ENCODE measurements at regions of chrX and their contacts with region 1.

Region 1: DNA sequence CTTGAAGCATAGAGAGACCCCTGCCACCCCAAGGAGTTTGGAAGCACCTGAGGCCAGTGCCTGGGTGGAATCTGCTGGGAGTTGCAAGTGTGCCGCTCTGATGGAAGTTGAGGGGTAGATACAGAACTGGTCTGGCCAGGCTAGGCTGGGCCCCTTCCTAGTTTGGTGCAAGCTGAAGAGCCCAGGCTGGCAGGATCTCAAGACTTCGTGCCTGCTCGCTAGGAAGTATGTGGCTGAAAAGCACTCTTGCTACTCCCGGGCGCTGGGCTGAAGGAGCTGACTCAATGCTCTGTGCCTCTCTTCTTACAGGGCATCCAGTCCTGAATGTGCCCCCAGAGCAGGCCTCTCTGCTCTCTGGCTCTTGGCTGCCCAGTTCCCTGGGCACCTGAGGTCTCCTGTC is 51.7 kb upstream of the PJA1 start:
- DNase-seq: no peak
- ATAC-seq: no peak
- H3K4me3 ChIP-seq: no peak overlapping the region
- H3K27ac ChIP-seq: no peak overlapping the region
- H3K4me1 ChIP-seq: no peaks in the 10 kb centered on the region
- H3K27me3 ChIP-seq: no peaks in the 10 kb centered on the region
- CTCF ChIP-seq: no peak

Region 2: DNA sequence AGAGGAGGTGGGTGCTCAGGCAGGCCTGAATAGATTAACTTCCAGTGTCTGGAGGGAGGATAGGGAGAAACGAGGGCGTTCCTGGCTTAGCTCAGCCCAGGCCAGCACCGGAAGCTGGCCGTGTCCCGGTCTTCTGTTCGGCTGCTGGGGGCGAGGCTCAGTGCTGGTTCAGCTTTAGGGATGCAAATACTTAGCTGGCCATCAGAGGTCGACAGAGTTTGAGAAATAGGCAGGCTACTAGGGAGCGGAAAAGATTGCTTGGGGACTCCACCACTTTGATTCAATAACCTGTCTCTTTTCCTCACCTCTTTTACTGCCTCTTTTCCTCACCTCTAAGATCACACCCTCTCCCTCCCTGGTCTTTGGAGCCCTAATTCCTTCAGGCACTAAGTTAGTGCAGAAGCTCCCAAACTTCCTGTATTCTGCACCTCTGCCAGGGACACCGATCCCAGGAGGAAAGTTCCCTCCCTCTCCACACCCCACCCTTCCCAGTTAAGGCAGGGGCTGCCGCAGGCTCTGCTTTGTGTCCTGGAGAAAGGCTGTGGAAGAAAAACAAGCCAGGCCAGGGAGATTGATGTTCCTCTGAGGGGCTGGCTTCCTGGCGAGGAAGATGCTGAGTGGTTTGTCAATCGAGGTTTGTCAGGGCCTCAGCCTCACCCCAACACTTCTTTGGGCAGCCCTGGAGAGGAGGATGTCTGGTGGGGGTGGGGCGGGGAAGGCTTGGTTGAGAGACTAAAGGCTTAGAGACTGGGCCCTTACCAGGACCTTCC is 394.1 kb before region 1 on chrX:
- intact Hi-C with region 1: loop called in 2 of 3 experiments (anchors 5 to 10 kb)
- DNase-seq: peak in 1 of 6 donors; percentile 42
- ATAC-seq: peak; percentile 61 to 93 (median 86)
- H3K4me3 ChIP-seq: no peak overlapping the region
- H3K27ac ChIP-seq: no peak overlapping the region
- H3K4me1 ChIP-seq: no peaks in the 10 kb centered on the region
- H3K27me3 ChIP-seq: peaks cover 0 to 9% (median 0%) of the 10 kb centered on the region in 4 donors
- CTCF ChIP-seq: peak in 3 of 4 donors; percentile 30 to 44 (median 39)

Region 3: GRCh38 chrX:69523314-69523713 is 306.4 kb after region 1 on chrX:
- intact Hi-C with region 1: no loop called
- DNase-seq: no peak
- ATAC-seq: no peak
- H3K4me3 ChIP-seq: no peak overlapping the region
- H3K27ac ChIP-seq: no peak overlapping the region
- H3K4me1 ChIP-seq: no peaks in the 10 kb centered on the region
- H3K27me3 ChIP-seq: no peaks in the 10 kb centered on the region
- CTCF ChIP-seq: no peak